ENCODE measurements at regions of chr18 and their contacts with region 1.

Region 1: GRCh38 chr18:24695168-24695567 is 234.7 kb downstream of the HRH4 start:
- DNase-seq: no peak
- ATAC-seq: no peak

Region 2: GRCh38 chr18:24649571-24649970 is 45.6 kb before region 1 on chr18:
- intact Hi-C with region 1: loop called (anchors 5 kb)
- DNase-seq: no peak
- ATAC-seq: no peak

Region 3: DNA sequence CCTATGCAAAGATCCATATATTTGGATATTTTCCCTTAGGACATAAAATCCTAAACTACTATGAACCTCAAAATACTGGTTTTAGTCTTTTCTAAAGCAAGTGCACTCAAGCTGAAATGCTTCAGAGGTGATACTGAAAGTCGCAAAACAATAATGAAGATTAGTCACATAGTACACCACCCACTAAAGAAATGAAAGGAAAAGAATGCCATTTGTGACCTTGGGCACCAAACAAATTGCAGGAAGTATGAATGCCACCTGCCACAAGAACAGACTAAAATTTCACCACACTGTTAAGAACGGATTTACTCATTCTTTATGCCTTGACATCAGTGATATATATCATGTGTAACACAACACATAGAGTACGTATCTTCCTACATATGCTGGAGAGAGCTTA is 495.3 kb after region 1 on chr18:
- intact Hi-C with region 1: no loop called
- DNase-seq: no peak
- ATAC-seq: no peak